Activated naive CD8-positive, alpha-beta T cell treated with anti-CD3 and anti-CD28 coated beads, Interleukin-2, amount 10 ng/mL, durations not matched to agents 7 days and 5 days (primary cell): ENCODE measurements at regions of chr10 and their contacts with region 1.

Region 1: DNA sequence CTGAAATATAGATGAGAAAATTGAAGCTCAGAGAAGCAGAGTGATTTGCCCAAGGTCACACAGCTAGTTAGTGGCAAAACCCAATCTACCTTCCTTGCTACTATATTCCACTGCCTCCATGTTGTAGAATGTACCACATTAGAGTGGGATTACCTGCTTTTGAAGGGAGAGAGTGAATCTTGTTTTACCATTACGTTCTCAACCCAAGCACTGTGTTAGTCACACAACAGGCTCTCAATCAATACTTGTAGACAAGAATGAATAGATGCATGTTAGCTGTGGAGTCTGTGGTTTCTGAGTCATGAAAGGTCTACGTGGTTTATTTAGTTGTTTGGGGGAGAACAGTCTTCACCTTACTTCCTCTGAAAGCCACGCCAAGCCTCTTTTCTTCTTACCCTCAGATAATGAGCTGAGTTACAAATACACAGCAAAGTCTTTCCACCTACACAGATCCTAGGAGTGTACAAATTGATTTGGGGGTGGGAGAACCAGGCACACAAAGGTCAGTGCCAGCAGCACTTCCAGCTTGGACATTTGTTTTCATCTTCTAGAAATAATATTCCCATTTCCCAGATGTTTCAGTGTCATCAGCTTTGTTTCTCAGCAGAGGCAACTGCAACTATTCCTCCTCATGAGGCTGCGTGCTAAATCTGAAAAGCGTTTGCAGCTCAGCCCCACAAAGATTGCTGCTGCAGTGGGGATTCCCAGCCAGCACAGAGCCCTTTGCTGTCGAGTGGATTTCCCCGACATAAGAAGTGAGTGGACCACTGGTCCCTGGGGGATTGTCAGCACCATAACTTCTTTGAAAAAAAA is 71.5 kb upstream of the ADO start:
- DNase-seq: peak; percentile 46
- ATAC-seq: peak; percentile 91
- H3K4me3 Mint-ChIP-seq: no peak overlapping the region
- H3K27ac Mint-ChIP-seq: no peak overlapping the region
- H3K4me1 Mint-ChIP-seq: peaks cover 16% of the 10 kb centered on the region
- H3K27me3 Mint-ChIP-seq: peaks cover 12% of the 10 kb centered on the region

Region 2: GRCh38 chr10:62480196-62480595 is 252.9 kb before region 1 on chr10:
- POLR2A ChIA-PET with region 1: no interaction called
- DNase-seq: no peak
- ATAC-seq: no peak
- H3K4me3 Mint-ChIP-seq: no peak overlapping the region
- H3K27ac Mint-ChIP-seq: no peak overlapping the region
- H3K4me1 Mint-ChIP-seq: peaks cover 4% of the 10 kb centered on the region
- H3K27me3 Mint-ChIP-seq: peaks cover 10% of the 10 kb centered on the region

Region 3: GRCh38 chr10:62637249-62638061 is 95.6 kb before region 1 on chr10:
- POLR2A ChIA-PET with region 1: interaction called, 14 read pairs
- DNase-seq: peak; percentile 64
- ATAC-seq: peak; percentile 93
- H3K4me3 Mint-ChIP-seq: no peak overlapping the region
- H3K27ac Mint-ChIP-seq: no peak overlapping the region
- H3K4me1 Mint-ChIP-seq: peaks cover 1% of the 10 kb centered on the region
- H3K27me3 Mint-ChIP-seq: no peaks in the 10 kb centered on the region

Region 4: GRCh38 chr10:62681211-62681940 is 51.7 kb before region 1 on chr10:
- POLR2A ChIA-PET with region 1: interaction called, 13 read pairs
- DNase-seq: peak; percentile 74
- ATAC-seq: peak; percentile 94
- H3K4me3 Mint-ChIP-seq: peak overlapping the region; percentile 59
- H3K27ac Mint-ChIP-seq: no peak overlapping the region
- H3K4me1 Mint-ChIP-seq: peaks cover 23% of the 10 kb centered on the region
- H3K27me3 Mint-ChIP-seq: peaks cover 2% of the 10 kb centered on the region

Region 5: GRCh38 chr10:62804356-62805230 is 71.5 kb after region 1 on chr10 and contains the start of gene ADO:
- POLR2A ChIA-PET with region 1: interaction called, 17 read pairs
- DNase-seq: peak; percentile 81
- ATAC-seq: peak; percentile 83
- H3K4me3 Mint-ChIP-seq: peak within 1 kb of the TSS; percentile 98
- H3K27ac Mint-ChIP-seq: peak within 1 kb of the TSS; percentile 100
- H3K4me1 Mint-ChIP-seq: peaks cover 32% of the 10 kb centered on the region
- H3K27me3 Mint-ChIP-seq: peaks cover 14% of the 10 kb centered on the region
- total RNA-seq, gene ADO: 23.2 to 23.3 TPM

Region 6: DNA sequence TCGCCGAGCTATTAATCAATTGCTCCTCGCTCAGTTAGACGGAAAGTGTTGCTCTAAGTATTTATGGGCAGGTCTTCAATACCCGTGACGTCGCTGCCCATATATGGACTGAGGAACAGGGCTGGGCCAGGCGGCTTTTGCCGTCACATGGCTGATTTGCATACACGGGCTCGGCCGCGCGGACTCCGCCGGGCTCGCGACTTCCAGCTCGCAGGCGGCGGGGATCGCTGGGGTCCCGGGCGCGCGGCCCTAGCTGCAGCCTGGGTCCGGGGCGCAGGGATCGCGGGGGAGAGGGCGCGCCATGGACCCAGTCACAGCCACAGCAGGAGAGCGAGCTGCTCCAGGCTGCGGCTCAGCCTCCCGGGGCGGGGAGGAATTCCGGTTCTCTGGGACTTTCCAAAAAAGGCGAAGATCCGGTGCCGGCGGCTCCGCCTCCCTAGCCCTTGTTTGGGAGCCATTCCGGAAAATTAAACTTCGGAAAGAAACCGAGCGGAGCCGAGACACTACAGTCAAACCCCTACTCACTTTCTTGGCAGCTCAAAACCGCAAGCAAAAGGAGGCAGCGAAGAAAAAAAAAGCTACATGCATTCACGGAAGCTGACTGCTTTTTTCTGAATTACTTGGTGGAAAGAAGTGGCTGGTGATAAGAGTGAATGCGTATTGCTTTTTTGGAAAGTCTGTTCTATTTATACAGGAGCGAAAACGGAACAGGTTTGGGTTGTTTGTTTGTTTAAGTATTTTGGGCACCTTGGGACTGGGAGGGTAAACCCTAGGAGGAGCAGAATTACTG is 83.5 kb after region 1 on chr10 and contains the start of gene EGR2:
- POLR2A ChIA-PET with region 1: interaction called, 21 read pairs
- DNase-seq: peak; percentile 93
- ATAC-seq: peak; percentile 82
- H3K4me3 Mint-ChIP-seq: peak within 1 kb of the TSS; percentile 92
- H3K27ac Mint-ChIP-seq: peak within 1 kb of the TSS; percentile 97
- H3K4me1 Mint-ChIP-seq: peaks cover 27% of the 10 kb centered on the region
- H3K27me3 Mint-ChIP-seq: peaks cover 50% of the 10 kb centered on the region
- total RNA-seq, gene EGR2: 1.4 to 2.2 TPM